ENCODE measurements at regions of chr7 and their contacts with region 1.

Region 1: DNA sequence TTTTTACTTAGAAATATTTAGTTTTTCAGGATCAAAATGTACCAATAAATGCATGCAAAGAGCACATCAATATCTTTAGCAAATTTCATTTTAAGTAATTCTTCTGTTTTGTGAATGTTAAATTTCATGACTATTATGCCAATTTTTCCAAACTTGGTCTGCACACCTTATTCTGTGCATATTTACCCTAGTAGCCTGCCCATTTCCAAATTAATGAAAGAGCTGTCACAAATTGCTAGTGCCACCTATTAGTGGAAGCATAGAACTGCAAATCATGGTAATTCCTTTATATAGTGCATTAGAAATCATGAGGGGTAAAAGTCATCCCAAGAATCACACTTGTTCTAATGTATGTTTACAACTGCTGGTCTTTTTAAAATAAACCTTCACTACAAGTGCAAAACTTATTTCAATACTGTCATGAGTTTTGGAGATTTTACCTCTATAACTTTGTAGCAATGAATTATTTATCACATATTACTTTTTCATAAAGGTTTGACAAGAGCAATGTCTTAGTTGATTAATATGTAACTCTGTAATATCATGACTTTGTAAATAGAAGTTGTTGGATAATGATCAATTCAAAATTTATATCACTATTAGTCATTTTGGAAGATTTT is 5.7 kb downstream of the SEMA3A start:
- DNase-seq: peak; percentile 63
- ATAC-seq: peak; percentile 16; the same call in 1 of the 2 replicates
- H3K4me3 ChIP-seq: peak overlapping the region; percentile 55
- H3K27ac ChIP-seq: peak overlapping the region; percentile 94
- H3K4me1 ChIP-seq: peaks cover 56% of the 10 kb centered on the region
- H3K27me3 ChIP-seq: no peaks in the 10 kb centered on the region
- CTCF ChIP-seq: peak; percentile 80

Region 2: DNA sequence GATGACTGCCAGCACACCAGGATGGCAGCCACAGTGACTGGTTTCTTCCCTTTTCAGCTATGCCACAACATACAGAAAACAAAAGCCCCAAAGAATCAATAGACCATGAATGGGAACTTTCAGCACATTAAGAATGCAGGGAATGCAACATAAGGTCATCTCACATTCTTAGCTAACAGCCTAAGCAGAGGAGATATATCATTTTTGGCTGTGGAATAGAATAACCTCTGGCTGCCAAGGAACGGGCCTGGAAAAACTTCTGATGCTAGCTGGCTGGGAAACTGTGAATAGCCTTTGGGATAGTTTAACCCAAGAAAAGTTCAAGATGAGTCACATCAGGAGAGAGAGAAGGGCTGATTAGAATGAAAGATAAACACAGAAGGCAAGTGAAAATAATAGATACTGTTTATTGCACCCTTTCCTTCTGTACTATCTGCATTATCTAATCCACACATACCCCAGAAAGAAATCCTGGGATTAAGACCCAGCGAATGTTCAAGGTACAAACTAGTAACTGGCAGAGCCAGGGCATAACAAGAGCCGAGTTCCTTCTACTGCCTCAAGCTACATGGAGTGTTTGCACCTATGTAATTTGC is 163.5 kb before region 1 on chr7:
- CTCF ChIA-PET with region 1: no interaction called
- POLR2A ChIA-PET with region 1: no interaction called
- intact Hi-C with region 1: loop called (anchors 1 kb)
- DNase-seq: peak; percentile 88
- ATAC-seq: peak; percentile 55
- H3K4me3 ChIP-seq: no peak overlapping the region
- H3K27ac ChIP-seq: peak overlapping the region; percentile 91
- H3K4me1 ChIP-seq: peaks cover 50% of the 10 kb centered on the region
- H3K27me3 ChIP-seq: no peaks in the 10 kb centered on the region
- CTCF ChIP-seq: no peak

Region 3: GRCh38 chr7:84058311-84059076 is 130.4 kb before region 1 on chr7:
- CTCF ChIA-PET with region 1: no interaction called
- POLR2A ChIA-PET with region 1: no interaction called
- intact Hi-C with region 1: loop called (anchors 2 kb)
- DNase-seq: peak; percentile 88
- ATAC-seq: peak; percentile 60
- H3K4me3 ChIP-seq: peak overlapping the region; percentile 39; the same call in 1 of the 2 replicates
- H3K27ac ChIP-seq: peak overlapping the region; percentile 93
- H3K4me1 ChIP-seq: peaks cover 59% of the 10 kb centered on the region
- H3K27me3 ChIP-seq: no peaks in the 10 kb centered on the region
- CTCF ChIP-seq: no peak

Region 4: GRCh38 chr7:85081392-85081791 is 892.5 kb after region 1 on chr7:
- CTCF ChIA-PET with region 1: no interaction called
- POLR2A ChIA-PET with region 1: no interaction called
- intact Hi-C with region 1: no loop called
- DNase-seq: no peak
- ATAC-seq: no peak
- H3K4me3 ChIP-seq: no peak overlapping the region
- H3K27ac ChIP-seq: no peak overlapping the region
- H3K4me1 ChIP-seq: no peaks in the 10 kb centered on the region
- H3K27me3 ChIP-seq: no peaks in the 10 kb centered on the region
- CTCF ChIP-seq: no peak